ENCODE measurements at regions of chr4 and their contacts with region 1.

Region 1: GRCh38 chr4:38319456-38320342 is 344.3 kb upstream of the KLF3 start:
- DNase-seq: no peak
- ATAC-seq: peak; percentile 70
- H3K4me3 ChIP-seq: peak overlapping the region in 1 of 2 experiments; percentile 29; a peak in 2 of 4 replicates
- H3K27ac ChIP-seq: peak overlapping the region; percentile 63
- H3K4me1 ChIP-seq: peaks cover 19 to 43% of the 10 kb centered on the region in 2 experiments
- H3K27me3 ChIP-seq: no peaks in the 10 kb centered on the region
- CTCF ChIP-seq: peak; percentile 72 to 99 (median 98)
- POLR2A ChIP-seq: no peak
- RAD21 ChIP-seq: peak; percentile 92

Region 2: DNA sequence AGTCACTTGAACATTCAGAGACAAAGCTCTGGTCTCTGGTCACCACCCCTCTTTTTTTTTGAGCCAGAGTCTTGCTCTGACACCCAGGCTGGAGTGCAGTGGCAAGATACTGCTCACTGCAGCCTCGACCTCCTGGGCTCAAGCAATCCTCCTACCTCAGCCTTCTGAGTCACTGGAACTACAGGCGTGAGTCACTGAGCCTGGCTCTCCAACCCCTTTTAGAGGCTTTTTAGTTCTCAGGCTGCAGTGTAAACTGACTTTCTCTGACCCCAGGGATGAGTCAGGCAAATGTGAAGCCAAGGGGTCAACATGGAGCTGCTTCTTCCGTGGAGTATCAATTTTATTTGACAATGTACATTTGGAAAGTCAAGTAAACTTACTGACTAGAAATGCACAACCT is 130.3 kb before region 1 on chr4:
- CTCF ChIA-PET with region 1: interaction called, 4 read pairs
- POLR2A ChIA-PET with region 1: interaction called, 3 read pairs
- RAD21 ChIA-PET with region 1: no interaction called
- intact Hi-C with region 1: loop called (anchors 2 kb)
- DNase-seq: peak; percentile 90
- ATAC-seq: peak; percentile 79
- H3K4me3 ChIP-seq: peak overlapping the region; percentile 10 to 46
- H3K27ac ChIP-seq: peak overlapping the region; percentile 63
- H3K4me1 ChIP-seq: peaks cover 33 to 36% of the 10 kb centered on the region in 2 experiments
- H3K27me3 ChIP-seq: no peaks in the 10 kb centered on the region
- CTCF ChIP-seq: no peak
- POLR2A ChIP-seq: no peak
- RAD21 ChIP-seq: peak; percentile 18; the same call in 1 of the 2 replicates

Region 3: DNA sequence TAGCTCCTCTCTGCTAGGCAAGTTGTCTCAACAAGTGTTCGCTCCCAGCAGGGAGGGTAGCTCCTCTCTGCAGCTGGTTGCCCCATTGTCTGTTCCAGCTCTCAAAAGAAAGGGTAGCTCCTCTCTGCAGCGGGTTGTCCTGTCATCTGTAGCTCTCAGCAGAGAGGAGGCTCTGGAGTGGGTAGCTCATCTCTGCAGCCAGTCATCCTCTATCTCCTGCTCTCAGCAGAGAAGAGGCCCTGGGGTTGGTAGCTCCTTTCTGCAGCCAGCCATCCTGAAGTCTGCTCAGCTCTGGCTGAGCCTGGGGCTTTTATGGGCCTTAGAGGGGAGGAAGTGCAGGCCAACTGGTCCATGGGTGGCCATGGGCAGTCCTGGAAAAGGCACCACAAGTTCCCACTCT is 16.8 kb before region 1 on chr4:
- CTCF ChIA-PET with region 1: no interaction called
- POLR2A ChIA-PET with region 1: no interaction called
- RAD21 ChIA-PET with region 1: no interaction called
- intact Hi-C with region 1: no loop called
- DNase-seq: no peak
- ATAC-seq: no peak
- H3K4me3 ChIP-seq: no peak overlapping the region
- H3K27ac ChIP-seq: no peak overlapping the region
- H3K4me1 ChIP-seq: no peaks in the 10 kb centered on the region
- H3K27me3 ChIP-seq: no peaks in the 10 kb centered on the region
- CTCF ChIP-seq: no peak
- POLR2A ChIP-seq: no peak
- RAD21 ChIP-seq: no peak

Region 4: GRCh38 chr4:38730830-38731646 is 411.3 kb after region 1 on chr4:
- CTCF ChIA-PET with region 1: interaction called, 10 read pairs
- POLR2A ChIA-PET with region 1: interaction called, 4 read pairs
- RAD21 ChIA-PET with region 1: interaction called, 3 to 6 read pairs
- intact Hi-C with region 1: loop called (anchors 1 kb)
- DNase-seq: peak; percentile 50
- ATAC-seq: peak; percentile 64
- H3K4me3 ChIP-seq: 0 out of 4 replicates have a peak overlapping the region, but pooled peaks of 1 of the 2 experiments have one; percentile 5
- H3K27ac ChIP-seq: no peak overlapping the region
- H3K4me1 ChIP-seq: peaks cover 22 to 30% of the 10 kb centered on the region in 2 experiments
- H3K27me3 ChIP-seq: no peaks in the 10 kb centered on the region
- CTCF ChIP-seq: peak; percentile 82 to 99 (median 96)
- POLR2A ChIP-seq: no peak
- RAD21 ChIP-seq: peak; percentile 96

Measured in HCT116 (cell line).